Prostate gland (tissue), 2 donors: ENCODE measurements at regions of chr11 and their contacts with region 1.

Region 1: DNA sequence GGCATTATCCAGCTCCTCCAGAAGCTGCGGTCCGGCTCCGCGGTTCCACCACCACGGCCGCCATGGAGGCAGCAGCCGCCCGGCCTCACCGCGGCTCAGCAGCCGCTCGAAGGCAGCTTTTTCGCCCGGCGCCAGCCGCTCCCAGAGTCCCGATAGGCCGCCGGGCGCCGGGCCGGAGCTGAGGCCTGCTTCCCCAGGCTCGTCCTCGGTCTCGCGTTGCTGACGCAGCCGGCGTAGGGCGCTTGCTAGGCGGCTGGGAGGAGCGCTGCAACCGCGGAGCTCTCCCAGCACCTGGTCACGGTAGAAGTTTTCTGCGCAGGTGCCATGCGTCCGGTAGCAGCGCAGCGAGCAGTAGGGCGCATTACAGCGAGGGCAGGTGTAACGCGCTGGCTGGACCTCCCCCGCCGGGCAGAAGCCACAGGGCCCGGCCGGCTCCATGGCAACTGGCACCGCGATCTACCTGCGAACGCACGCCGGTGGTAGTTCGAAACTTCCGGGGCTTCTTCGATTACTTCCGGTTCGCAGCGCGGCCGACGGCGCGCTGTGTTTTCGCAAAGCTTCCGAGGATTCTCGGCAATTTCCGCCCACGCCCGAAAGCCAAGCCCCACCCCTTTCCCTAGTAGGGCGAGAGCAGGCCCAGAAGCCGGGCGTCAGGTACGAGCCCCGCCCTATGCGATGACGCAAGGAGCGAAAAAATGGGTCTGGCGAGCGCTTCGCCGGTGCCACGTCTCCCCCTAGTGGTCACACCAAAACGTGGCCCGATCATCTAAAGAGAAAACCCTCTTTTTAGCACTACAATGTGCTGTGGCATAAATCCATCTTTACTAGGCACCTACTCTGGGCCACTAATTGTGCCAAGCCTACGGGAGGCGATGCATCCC is at the start of gene ZNHIT2:
- DNase-seq: peak; percentile 99
- H3K4me3 ChIP-seq: peak within 1 kb of the TSS; percentile 79 to 82
- H3K27ac ChIP-seq: peak within 1 kb of the TSS; percentile 81 to 83
- H3K4me1 ChIP-seq: peaks cover 24% of the 10 kb centered on the region
- H3K27me3 ChIP-seq: no peaks in the 10 kb centered on the region
- CTCF ChIP-seq: peak; percentile 92 to 100 (median 98)
- POLR2A ChIP-seq: peak; percentile 54
- total RNA-seq, gene ZNHIT2: 32.7 to 37.8 TPM

Region 2: GRCh38 chr11:64854534-64855429 is 262.7 kb before region 1 on chr11:
- intact Hi-C with region 1: loop called (anchors 10 kb)
- DNase-seq: no peak
- H3K4me3 ChIP-seq: no peak overlapping the region
- H3K27ac ChIP-seq: peak overlapping the region; percentile 19 to 36
- H3K4me1 ChIP-seq: no peaks in the 10 kb centered on the region
- H3K27me3 ChIP-seq: no peaks in the 10 kb centered on the region
- CTCF ChIP-seq: no peak
- POLR2A ChIP-seq: no peak

Region 3: GRCh38 chr11:64916775-64917662 is 200.4 kb before region 1 on chr11 and contains the start of gene ATG2A:
- intact Hi-C with region 1: loop called (anchors 10 kb)
- DNase-seq: peak; percentile 99
- H3K4me3 ChIP-seq: peak within 1 kb of the TSS; percentile 76 to 92
- H3K27ac ChIP-seq: peak within 1 kb of the TSS; percentile 71 to 80
- H3K4me1 ChIP-seq: peaks cover 17% of the 10 kb centered on the region
- H3K27me3 ChIP-seq: no peaks in the 10 kb centered on the region
- CTCF ChIP-seq: peak in 1 of 4 experiments; percentile 18
- POLR2A ChIP-seq: peak; percentile 98
- total RNA-seq, gene ATG2A: 38.4 to 66.1 TPM

Region 4: GRCh38 chr11:65013692-65014145 is 103.7 kb before region 1 on chr11:
- intact Hi-C with region 1: loop called (anchors 1 kb)
- DNase-seq: peak; percentile 88
- H3K4me3 ChIP-seq: peak overlapping the region; percentile 68 to 76
- H3K27ac ChIP-seq: peak overlapping the region; percentile 99
- H3K4me1 ChIP-seq: no peaks in the 10 kb centered on the region
- H3K27me3 ChIP-seq: no peaks in the 10 kb centered on the region
- CTCF ChIP-seq: peak in 2 of 4 experiments; percentile 89 to 90
- POLR2A ChIP-seq: no peak

Region 5: GRCh38 chr11:65083834-65084597 is 33.4 kb before region 1 on chr11 and contains the starts of genes CDCA5 and ZFPL1:
- intact Hi-C with region 1: loop called (anchors 5 kb)
- DNase-seq: peak; percentile 93
- H3K4me3 ChIP-seq: peak within 1 kb of the TSS; percentile 77 to 78
- H3K27ac ChIP-seq: peak within 1 kb of the TSS; percentile 91 to 94
- H3K4me1 ChIP-seq: peaks cover 5% of the 10 kb centered on the region
- H3K27me3 ChIP-seq: no peaks in the 10 kb centered on the region
- CTCF ChIP-seq: peak in 2 of 4 experiments; percentile 29 to 30
- POLR2A ChIP-seq: peak; percentile 57
- total RNA-seq, gene CDCA5: 2.3 to 17.8 TPM
- total RNA-seq, gene ZFPL1: 61.6 to 62.6 TPM